Endothelial cell of umbilical vein (primary cell): ENCODE measurements at regions of chr17 and their contacts with region 1.

Region 1: DNA sequence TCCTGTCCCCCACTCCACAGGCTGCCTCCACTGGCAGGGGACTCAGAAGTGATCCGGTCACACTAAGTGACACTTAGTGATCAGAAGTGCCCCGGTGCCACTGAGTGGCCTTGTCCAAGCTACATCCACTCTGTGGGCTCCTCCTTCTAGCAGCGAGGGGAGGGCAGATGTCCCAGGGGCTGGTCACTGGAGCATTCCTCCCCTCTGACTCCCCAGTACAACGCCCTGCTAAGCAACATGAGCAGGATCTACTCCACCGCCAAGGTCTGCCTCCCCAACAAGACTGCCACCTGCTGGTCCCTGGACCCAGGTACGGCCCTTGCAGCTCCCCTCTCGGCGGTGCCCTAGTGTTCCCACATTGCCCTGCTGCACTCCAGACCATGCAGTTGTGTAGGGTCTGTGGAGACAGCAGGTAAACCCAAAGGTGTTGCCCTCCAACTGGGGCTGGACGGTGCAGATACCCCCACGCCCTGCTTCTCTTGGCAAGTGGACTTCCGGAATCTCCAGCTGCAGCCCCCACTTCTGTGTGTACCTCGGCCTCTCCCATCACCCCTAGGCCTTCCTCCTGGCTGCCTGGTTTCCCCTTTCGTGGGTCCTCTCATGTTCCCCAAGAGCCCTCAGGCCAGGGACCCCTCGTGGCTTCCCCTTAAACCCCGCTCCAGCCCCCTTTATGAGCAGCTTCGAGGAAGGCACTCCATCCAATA is 2.1 kb downstream of the ACE start:
- DNase-seq: peak; percentile 81
- H3K4me3 ChIP-seq: peak overlapping the region in 1 of 3 experiments; percentile 62
- H3K27ac ChIP-seq: no peak overlapping the region
- H3K4me1 ChIP-seq: peaks cover 27% of the 10 kb centered on the region
- H3K27me3 ChIP-seq: no peaks in the 10 kb centered on the region
- CTCF ChIP-seq: peak; percentile 87 to 96
- POLR2A ChIP-seq: no peak

Region 2: DNA sequence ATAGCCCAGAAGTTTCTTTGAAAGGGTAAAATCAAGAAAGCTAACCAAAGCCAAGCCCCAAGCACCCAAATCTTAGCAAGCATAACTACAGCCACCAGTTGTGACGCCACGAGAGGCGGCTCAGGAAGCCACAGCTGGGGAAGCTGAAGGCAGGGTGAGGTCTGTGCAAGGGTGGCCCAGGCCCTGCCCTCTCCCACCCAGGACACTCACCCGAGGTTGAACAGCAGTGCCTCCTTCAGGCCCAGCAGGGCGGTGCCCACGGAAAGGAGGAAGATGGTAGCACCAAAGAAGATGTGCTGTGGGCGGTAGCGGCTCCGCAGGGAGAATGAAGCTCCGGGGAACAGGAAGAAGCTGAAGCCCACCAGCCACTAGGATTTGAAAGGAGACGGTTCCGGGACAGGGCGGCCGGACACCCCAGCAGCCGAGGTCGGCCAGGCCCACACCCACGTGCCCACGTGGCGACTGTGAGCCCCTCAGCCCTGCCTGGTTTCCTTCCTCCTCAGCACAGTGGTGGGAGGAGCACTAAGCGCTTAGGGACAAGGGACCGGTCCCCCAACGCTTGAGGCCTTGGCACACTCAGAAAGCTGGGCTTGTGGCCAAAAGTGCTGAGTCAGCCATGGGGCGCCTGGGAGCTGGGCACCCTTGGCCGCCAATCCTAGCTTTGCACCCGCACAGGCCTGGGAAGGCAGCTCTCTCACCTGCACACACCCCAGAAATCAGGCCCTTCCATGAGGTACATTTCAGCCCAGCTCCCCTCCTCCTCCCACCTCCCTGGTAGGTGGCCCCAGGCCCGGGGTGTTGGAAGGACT is 43.9 kb before region 1 on chr17:
- CTCF ChIA-PET with region 1: interaction called, 540 read pairs
- POLR2A ChIA-PET with region 1: interaction called, 5 read pairs
- dilution Hi-C with region 1: no loop called
- intact Hi-C with region 1: no loop called
- DNase-seq: peak; percentile 39
- H3K4me3 ChIP-seq: no peak overlapping the region
- H3K27ac ChIP-seq: no peak overlapping the region
- H3K4me1 ChIP-seq: peaks cover 35% of the 10 kb centered on the region
- H3K27me3 ChIP-seq: no peaks in the 10 kb centered on the region
- CTCF ChIP-seq: peak; percentile 23 to 27
- POLR2A ChIP-seq: no peak

Region 3: GRCh38 chr17:63455417-63455816 is 23.5 kb before region 1 on chr17:
- CTCF ChIA-PET with region 1: interaction called, 25 read pairs
- POLR2A ChIA-PET with region 1: no interaction called
- dilution Hi-C with region 1: no loop called
- intact Hi-C with region 1: loop called (anchors 1 kb)
- DNase-seq: peak; percentile 76
- H3K4me3 ChIP-seq: no peak overlapping the region
- H3K27ac ChIP-seq: no peak overlapping the region
- H3K4me1 ChIP-seq: peaks cover 19% of the 10 kb centered on the region
- H3K27me3 ChIP-seq: no peaks in the 10 kb centered on the region
- CTCF ChIP-seq: no peak
- POLR2A ChIP-seq: no peak

Region 4: GRCh38 chr17:63497708-63498483 is 19.0 kb after region 1 on chr17:
- CTCF ChIA-PET with region 1: interaction called, 12 read pairs
- POLR2A ChIA-PET with region 1: interaction called, 5 read pairs
- dilution Hi-C with region 1: no loop called
- intact Hi-C with region 1: no loop called
- DNase-seq: no peak
- H3K4me3 ChIP-seq: no peak overlapping the region
- H3K27ac ChIP-seq: no peak overlapping the region
- H3K4me1 ChIP-seq: no peaks in the 10 kb centered on the region
- H3K27me3 ChIP-seq: peaks cover 2 to 3% of the 10 kb centered on the region in 2 experiments
- CTCF ChIP-seq: peak; percentile 5 to 44
- POLR2A ChIP-seq: no peak

Region 5: GRCh38 chr17:63503334-63503692 is 24.4 kb after region 1 on chr17:
- CTCF ChIA-PET with region 1: interaction called, 12 read pairs
- POLR2A ChIA-PET with region 1: no interaction called
- dilution Hi-C with region 1: no loop called
- intact Hi-C with region 1: no loop called
- DNase-seq: no peak
- H3K4me3 ChIP-seq: no peak overlapping the region
- H3K27ac ChIP-seq: no peak overlapping the region
- H3K4me1 ChIP-seq: no peaks in the 10 kb centered on the region
- H3K27me3 ChIP-seq: peaks cover 2 to 16% of the 10 kb centered on the region in 2 experiments
- CTCF ChIP-seq: no peak
- POLR2A ChIP-seq: no peak

Region 6: GRCh38 chr17:63542942-63543821 is 64.2 kb after region 1 on chr17:
- CTCF ChIA-PET with region 1: no interaction called
- POLR2A ChIA-PET with region 1: no interaction called
- dilution Hi-C with region 1: no loop called
- intact Hi-C with region 1: no loop called
- DNase-seq: no peak
- H3K4me3 ChIP-seq: no peak overlapping the region
- H3K27ac ChIP-seq: no peak overlapping the region
- H3K4me1 ChIP-seq: no peaks in the 10 kb centered on the region
- H3K27me3 ChIP-seq: peaks cover 12 to 13% of the 10 kb centered on the region in 2 experiments
- CTCF ChIP-seq: no peak
- POLR2A ChIP-seq: no peak